GM10248 (cell line): ENCODE measurements at regions of chr2 and their contacts with region 1.

Region 1: DNA sequence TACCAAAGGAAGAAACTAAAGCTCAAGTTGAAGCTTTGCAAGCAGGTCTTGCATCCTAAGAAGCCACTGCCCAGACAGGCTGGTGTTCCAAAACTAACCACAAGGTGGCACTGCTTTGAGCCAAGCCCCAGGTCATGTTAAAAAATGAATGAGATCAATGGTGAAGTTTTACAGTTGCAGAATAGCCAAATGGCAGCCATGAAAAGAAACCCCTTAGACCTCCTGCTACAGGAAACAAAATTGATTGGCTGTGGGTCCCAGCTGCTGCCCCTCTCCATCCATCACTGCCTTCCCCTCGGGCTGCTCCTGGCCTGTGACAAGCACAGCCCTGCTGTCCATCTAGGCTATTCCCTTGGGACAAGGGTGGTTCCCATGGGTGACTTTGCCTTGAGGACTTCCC is 20.7 kb upstream of the MREG start:
- DNase-seq: peak; percentile 71
- CTCF ChIP-seq: peak; percentile 83

Region 2: DNA sequence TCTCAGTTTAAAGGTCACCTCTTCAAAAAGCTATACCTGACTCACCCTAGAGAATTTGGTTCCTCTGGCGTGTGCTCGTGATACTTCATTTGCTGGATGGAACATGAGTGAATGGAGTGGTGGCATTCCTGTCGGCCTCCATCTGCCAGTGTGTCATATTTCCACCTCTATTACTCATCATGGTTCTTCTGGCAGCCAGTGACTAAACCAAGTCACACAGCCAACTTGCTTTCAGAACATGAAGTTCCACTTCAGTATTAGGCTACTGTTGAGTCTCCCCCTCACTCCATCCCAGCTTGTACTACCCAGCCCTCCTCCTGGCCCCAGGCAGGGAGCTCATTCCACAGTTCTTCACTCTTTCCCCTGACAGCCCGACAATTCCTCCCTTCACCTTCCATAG is 190.5 kb before region 1 on chr2:
- CTCF ChIA-PET with region 1: no interaction called
- POLR2A ChIA-PET with region 1: no interaction called
- DNase-seq: no peak
- CTCF ChIP-seq: no peak

Region 3: DNA sequence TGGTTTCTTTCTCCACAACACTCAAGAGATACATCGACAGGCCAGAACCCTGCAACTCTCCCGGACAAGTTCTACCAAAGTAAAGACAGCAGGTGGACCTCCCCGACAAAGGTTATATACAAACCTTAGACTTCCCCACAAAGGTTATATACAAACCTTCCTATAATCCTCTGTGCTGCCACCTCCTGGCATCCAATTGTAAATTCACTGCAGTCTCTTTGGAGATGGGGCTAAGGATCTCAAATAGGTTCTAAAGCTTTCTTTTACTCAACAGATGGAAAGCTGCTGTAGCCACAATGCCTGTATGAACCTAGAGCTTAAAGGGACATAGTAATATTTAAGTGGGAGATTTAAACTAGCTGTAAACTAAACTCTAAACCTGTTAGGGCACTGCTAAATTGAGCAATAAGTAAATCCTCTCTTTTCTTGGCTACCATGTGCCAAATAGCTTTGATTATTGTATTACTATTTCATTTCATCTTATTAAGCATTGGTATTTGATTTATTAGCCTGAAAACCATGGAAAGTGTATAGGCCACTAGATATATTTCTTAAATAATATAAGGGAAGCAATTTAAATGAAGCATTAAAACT is 10.9 kb before region 1 on chr2:
- CTCF ChIA-PET with region 1: interaction called, 193 read pairs
- POLR2A ChIA-PET with region 1: interaction called, 4 read pairs
- DNase-seq: peak; percentile 60
- CTCF ChIP-seq: peak; percentile 74

Region 4: GRCh38 chr2:216044883-216045486 is 10.9 kb after region 1 on chr2:
- CTCF ChIA-PET with region 1: interaction called, 58 read pairs
- POLR2A ChIA-PET with region 1: interaction called, 3 read pairs
- DNase-seq: peak; percentile 31
- CTCF ChIP-seq: no peak

Region 5: DNA sequence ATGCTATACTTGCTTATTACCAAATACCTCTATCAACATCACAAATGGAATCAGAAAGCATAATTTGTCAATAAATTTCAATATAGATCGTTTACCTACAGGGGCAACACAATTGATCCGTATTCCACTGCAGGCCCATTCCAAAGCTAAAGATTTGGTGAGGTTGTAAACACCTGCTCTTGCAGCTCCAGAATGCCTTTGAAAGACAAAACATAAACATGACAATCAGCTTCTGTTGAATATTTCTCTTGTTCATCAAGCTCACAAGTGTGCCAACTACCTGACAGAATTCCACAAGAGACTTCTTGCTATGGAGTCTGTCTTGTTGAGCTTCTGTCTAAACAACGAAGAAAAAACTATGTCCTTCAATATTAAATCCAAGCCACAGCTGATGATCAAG is 17.3 kb after region 1 on chr2:
- CTCF ChIA-PET with region 1: interaction called, 39 read pairs
- POLR2A ChIA-PET with region 1: no interaction called
- DNase-seq: no peak
- CTCF ChIP-seq: no peak

Region 6: GRCh38 chr2:216057688-216058193 is 23.7 kb after region 1 on chr2:
- CTCF ChIA-PET with region 1: interaction called, 39 read pairs
- POLR2A ChIA-PET with region 1: no interaction called
- DNase-seq: peak; percentile 78
- CTCF ChIP-seq: no peak

Region 7: DNA sequence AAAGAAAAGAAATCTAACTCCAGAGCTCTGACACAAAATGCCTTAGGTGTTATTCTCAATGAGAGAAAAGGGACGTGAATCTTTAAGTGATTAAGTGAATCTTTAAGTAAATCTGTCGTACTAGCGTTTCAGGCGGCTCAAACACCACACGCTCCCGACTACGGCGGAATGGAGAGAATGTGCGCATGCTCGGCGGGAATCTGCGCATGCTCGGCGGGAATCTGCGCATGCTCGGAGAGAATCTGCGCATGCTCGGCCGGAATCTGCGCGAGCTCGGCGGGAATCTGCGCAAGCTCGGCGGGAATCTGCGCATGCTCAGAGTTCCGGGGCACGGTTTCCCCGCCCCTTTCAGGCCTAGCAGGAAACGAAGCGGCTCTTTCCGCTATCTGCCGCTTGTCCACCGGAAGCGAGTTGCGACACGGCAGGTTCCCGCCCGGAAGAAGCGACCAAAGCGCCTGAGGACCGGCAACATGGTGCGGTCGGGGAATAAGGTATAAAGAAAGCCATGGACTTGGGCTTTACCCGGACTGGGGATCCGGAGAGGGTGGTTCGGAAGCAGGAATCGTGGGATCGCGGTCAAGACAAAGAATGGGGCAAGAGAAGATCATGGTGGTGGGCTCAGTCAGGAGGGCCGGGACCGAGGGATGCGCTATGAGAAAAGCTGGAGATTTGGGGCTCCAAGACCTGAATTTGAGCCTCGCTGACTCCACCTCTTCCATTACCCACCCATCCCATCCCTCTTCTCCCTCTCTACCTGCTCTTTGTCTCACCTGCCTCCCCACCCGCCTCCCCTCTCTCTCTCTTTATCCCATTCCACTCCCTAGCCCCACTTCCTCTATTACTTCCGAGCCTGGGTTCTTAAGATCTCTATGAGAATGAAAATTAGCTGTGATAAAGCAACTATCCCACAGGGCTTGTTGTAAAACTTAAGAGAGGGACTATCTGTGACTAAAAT is 75.2 kb after region 1 on chr2 and contains the start of gene XRCC5:
- CTCF ChIA-PET with region 1: interaction called, 32 read pairs
- POLR2A ChIA-PET with region 1: no interaction called
- DNase-seq: peak; percentile 93
- CTCF ChIP-seq: no peak

Region 8: GRCh38 chr2:216139884-216140283 is 105.8 kb after region 1 on chr2:
- CTCF ChIA-PET with region 1: interaction called, 12 read pairs
- POLR2A ChIA-PET with region 1: no interaction called
- DNase-seq: peak; percentile 18
- CTCF ChIP-seq: peak; percentile 41